Panc1 (cell line): ENCODE measurements at regions of chr3 and their contacts with region 1.

Region 1: DNA sequence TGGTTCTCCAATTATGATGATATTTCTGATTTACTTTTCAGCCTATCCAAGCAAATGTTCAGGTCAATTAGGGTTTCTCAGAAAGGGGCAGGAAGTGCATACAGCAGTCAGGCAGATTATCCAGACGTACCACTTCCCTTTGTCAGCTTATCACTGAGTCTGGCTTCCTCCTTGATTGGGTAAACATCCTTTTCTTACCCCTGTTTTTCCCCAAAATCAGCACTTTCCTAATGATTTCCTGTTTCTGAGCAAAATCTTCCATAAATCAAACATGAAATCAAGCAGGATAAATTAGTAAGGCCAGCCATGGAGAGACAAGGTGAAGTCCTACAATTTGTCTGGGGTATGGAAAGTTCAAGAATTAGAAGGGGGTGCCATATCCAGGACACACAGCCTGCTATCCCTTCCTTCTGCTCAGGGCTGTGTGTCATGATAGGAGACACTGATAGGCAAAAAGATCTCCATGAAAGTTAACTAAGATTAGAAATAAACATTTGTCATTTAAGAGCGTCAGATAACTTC is 29.0 kb downstream of the ADIPOQ start:
- DNase-seq: no peak
- ATAC-seq: no peak
- H3K4me3 ChIP-seq: no peak overlapping the region
- H3K27ac ChIP-seq: no peak overlapping the region
- H3K4me1 ChIP-seq: no peaks in the 10 kb centered on the region
- H3K27me3 ChIP-seq: no peaks in the 10 kb centered on the region
- CTCF ChIP-seq: no peak

Region 2: DNA sequence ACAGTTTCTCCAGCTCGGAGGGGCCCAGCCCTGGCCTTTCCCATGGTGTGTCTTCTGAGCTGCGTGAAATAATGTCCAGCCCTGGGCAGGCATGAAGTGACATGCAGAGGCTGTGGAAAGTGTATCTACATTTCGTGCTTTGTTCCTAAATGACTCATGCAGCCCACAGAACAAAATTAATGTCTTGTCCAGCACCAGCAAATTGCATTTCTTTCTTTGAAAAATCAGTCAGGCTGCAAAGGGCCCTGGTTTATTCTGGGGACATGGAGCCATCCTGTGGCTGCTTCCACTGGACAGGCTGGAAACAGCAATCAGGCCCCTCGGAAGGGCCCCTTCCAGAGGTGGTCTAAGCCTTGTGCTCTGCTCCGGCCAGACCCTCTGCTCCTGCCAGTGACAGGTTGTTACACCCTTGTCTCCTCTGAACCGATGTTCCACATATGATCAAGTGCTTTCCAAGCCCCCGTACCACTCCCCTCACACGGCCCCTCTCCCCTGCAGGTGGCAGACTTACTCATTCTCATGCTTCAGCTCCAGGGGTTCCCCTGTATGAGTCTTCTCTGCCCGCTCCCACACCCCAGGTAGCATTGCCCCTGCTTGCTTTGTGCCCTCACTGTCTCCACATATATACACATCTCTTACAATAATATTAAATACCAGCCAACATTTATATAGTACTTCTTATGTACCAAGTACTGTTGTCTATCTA is 360.9 kb before region 1 on chr3:
- CTCF ChIA-PET with region 1: no interaction called
- POLR2A ChIA-PET with region 1: no interaction called
- in situ Hi-C with region 1: no loop called
- intact Hi-C with region 1: no loop called
- DNase-seq: no peak
- ATAC-seq: no peak
- H3K4me3 ChIP-seq: no peak overlapping the region
- H3K27ac ChIP-seq: no peak overlapping the region
- H3K4me1 ChIP-seq: no peaks in the 10 kb centered on the region
- H3K27me3 ChIP-seq: peaks cover 51% of the 10 kb centered on the region
- CTCF ChIP-seq: no peak

Region 3: GRCh38 chr3:186839874-186840641 is 31.4 kb before region 1 on chr3:
- CTCF ChIA-PET with region 1: no interaction called
- POLR2A ChIA-PET with region 1: interaction called, 13 read pairs
- in situ Hi-C with region 1: no loop called
- intact Hi-C with region 1: no loop called
- DNase-seq: no peak
- ATAC-seq: no peak
- H3K4me3 ChIP-seq: no peak overlapping the region
- H3K27ac ChIP-seq: no peak overlapping the region
- H3K4me1 ChIP-seq: no peaks in the 10 kb centered on the region
- H3K27me3 ChIP-seq: peaks cover 2% of the 10 kb centered on the region
- CTCF ChIP-seq: no peak